Activated CD4-positive, alpha-beta memory T cell treated with anti-CD3 and anti-CD28 coated beads for 36 hours (primary cell): ENCODE measurements at regions of chr11 and their contacts with region 1.

Region 1: DNA sequence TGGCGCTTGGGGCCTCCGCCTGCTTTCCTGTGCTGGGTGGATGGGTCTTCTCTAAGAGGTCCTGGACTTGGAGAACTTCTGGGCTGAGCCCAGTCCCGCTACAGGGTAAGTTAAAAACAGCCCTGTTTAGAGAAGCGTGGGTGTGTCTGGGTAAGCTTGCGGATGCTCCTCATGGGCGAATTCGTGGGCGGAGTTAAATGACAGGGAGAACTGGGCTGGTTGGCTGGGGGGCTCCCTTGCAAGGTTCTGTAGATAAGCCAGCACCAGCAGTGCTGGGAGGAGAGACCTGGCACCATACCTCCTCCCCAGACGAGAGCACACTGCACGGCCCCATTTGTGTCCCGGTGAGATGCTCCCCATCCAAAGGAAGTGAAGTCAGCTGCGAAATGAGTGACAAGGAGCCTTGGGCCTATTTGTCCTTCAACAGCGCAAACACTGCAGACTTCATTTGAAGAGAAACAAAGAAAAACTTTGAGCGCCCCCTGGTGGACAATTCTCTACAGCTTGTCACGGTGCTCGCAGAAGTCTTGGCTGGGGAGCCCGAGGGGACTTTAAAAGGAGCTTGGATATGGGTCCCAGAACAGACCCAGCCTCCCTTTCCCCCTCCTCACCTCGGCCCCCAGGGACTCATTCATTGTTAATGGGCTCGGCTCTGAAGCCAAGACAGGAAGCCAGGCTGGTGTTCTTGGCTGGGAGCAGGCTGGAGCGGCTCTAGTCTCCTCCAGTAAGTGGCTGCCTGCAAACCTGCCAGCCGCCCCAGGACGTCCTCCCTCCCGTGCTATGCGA is 39.5 kb downstream of the TP53I11 start:
- DNase-seq: peak; percentile 88
- H3K4me3 Mint-ChIP-seq: no peak overlapping the region
- H3K27ac Mint-ChIP-seq: no peak overlapping the region
- H3K4me1 Mint-ChIP-seq: peaks cover 4% of the 10 kb centered on the region
- H3K27me3 Mint-ChIP-seq: no peaks in the 10 kb centered on the region

Region 2: GRCh38 chr11:44556735-44557409 is 354.4 kb before region 1 on chr11:
- CTCF ChIA-PET with region 1: interaction called, 44 read pairs
- POLR2A ChIA-PET with region 1: no interaction called
- intact Hi-C with region 1: loop called (anchors 2 kb)
- DNase-seq: peak; percentile 79
- H3K4me3 Mint-ChIP-seq: no peak overlapping the region
- H3K27ac Mint-ChIP-seq: no peak overlapping the region
- H3K4me1 Mint-ChIP-seq: peaks cover 29% of the 10 kb centered on the region
- H3K27me3 Mint-ChIP-seq: no peaks in the 10 kb centered on the region

Region 3: DNA sequence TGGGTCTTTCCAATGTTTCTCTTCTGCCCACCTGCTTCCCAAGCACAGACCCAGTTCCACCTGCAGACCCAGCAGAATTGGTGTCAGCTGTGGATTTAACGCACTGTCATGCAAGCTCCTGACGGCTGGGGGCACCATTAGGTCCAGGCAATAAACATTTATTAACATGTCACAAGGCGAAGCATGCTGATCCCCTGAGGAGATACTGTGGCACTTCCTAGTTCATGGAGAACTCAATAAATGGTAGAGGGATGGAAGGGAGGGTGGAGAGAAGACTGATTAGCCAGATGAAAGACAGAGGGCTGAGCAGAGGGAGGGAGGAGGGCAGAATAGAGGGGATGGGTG is 252.7 kb before region 1 on chr11:
- CTCF ChIA-PET with region 1: interaction called, 11 read pairs
- POLR2A ChIA-PET with region 1: no interaction called
- intact Hi-C with region 1: loop called (anchors 2 kb)
- DNase-seq: peak; percentile 52
- H3K4me3 Mint-ChIP-seq: no peak overlapping the region
- H3K27ac Mint-ChIP-seq: no peak overlapping the region
- H3K4me1 Mint-ChIP-seq: peaks cover 21% of the 10 kb centered on the region
- H3K27me3 Mint-ChIP-seq: no peaks in the 10 kb centered on the region

Region 4: DNA sequence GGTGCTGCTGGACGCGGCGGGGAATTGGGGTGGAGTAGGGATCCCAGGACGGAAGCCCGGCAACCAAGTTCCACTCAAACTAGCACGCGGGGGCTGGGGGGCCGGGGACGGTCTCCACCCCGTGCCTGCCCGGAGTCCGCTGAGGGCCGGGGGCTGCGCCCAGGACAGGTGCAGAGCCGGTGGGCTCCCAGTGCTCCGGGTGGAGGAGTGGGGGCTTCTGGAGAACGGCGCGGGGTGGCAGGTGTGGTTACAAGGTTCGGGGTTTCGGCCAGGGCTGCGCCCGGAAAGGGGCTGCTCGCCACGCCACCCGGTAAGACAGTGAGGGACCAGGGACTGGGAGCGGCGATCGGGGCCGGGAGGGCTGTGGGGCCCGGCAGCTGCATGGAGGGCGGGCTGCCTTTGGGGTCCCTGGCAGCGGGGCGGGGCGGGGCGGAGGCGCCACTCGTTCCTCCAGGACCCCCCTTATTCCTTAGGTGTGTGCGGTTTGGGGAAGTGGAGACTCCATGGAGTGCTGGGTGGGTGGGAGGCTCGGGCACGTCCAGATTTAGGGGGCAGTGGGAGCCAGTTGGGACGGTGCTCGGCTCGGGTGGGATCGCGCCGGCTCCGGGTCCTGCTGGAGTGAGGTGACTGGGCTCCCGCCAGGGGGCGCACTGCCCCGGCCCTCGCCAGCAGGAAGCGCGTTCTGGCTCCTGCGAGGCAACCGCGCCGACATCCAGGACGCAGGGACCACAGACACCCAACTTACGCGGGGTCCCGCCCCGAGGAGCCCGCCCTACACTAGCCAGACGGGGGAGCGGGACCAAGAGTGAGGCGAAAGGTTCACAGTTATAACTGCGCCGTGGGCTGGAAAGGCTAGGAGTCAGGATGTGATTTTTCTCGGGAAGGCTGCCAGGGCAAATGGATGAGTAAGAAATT is 183.6 kb before region 1 on chr11:
- CTCF ChIA-PET with region 1: interaction called, 5 read pairs
- POLR2A ChIA-PET with region 1: no interaction called
- intact Hi-C with region 1: loop called (anchors 2 kb)
- DNase-seq: peak; percentile 88
- H3K4me3 Mint-ChIP-seq: peak overlapping the region; percentile 82
- H3K27ac Mint-ChIP-seq: peak overlapping the region; percentile 67
- H3K4me1 Mint-ChIP-seq: peaks cover 51% of the 10 kb centered on the region
- H3K27me3 Mint-ChIP-seq: no peaks in the 10 kb centered on the region

Region 5: GRCh38 chr11:44785856-44786606 is 125.2 kb before region 1 on chr11:
- CTCF ChIA-PET with region 1: interaction called, 11 read pairs
- POLR2A ChIA-PET with region 1: no interaction called
- intact Hi-C with region 1: no loop called
- DNase-seq: peak; percentile 20
- H3K4me3 Mint-ChIP-seq: no peak overlapping the region
- H3K27ac Mint-ChIP-seq: no peak overlapping the region
- H3K4me1 Mint-ChIP-seq: no peaks in the 10 kb centered on the region
- H3K27me3 Mint-ChIP-seq: no peaks in the 10 kb centered on the region

Region 6: DNA sequence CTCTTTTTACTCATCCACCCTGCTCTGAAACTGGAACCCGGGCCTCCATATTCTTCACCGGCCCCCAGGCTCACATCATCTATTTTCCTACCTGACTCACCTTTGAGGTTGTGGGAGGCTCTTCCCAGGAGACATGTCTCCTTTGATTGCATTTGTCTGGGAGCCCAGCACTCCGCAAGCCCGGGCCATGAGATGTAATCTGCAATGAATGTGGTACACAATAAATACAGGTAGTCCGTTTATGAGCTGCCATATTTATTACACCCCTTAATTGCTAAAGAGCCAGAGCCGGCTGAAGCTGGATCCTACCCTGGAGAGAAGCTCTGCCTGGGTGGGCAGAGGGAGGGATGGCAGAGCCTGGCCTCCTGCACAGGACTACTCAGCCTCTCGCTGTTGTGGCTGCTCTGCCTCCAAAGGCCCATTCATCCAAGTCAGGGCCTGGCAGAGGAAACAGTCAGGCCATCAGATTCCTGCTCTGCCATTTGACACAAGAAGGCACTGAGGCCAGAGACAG is 10.0 kb before region 1 on chr11:
- CTCF ChIA-PET with region 1: interaction called, 11 read pairs
- POLR2A ChIA-PET with region 1: no interaction called
- intact Hi-C with region 1: no loop called
- DNase-seq: no peak
- H3K4me3 Mint-ChIP-seq: no peak overlapping the region
- H3K27ac Mint-ChIP-seq: no peak overlapping the region
- H3K4me1 Mint-ChIP-seq: peaks cover 4% of the 10 kb centered on the region
- H3K27me3 Mint-ChIP-seq: no peaks in the 10 kb centered on the region

Region 7: DNA sequence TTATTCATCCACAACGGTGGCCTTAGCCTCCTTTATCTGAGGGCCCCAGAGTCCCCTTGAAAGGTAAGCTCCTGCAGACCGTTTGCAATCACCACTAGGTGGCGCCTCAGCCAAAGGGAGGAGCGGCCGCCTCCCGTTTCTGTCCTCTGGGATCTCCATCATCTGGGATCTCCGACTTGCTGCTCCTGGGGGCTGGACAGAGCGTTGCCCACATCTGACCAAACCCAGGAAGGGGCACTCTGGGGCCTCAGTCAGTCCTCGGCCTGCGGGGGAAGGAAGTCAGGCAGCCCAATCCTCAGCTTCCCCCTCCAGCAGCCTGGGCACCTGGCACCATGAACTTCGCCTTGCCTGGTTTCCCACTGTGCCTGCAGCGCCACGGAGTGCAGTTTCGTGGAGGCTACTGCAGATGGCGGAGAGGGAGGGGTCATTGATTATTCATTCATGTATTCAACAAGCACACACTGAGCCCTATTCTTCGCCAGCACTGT is 16.0 kb after region 1 on chr11:
- CTCF ChIA-PET with region 1: interaction called, 16 read pairs
- POLR2A ChIA-PET with region 1: no interaction called
- intact Hi-C with region 1: no loop called
- DNase-seq: peak; percentile 67
- H3K4me3 Mint-ChIP-seq: no peak overlapping the region
- H3K27ac Mint-ChIP-seq: no peak overlapping the region
- H3K4me1 Mint-ChIP-seq: no peaks in the 10 kb centered on the region
- H3K27me3 Mint-ChIP-seq: no peaks in the 10 kb centered on the region